B cell (primary cell): ENCODE measurements at regions of chr9 and their contacts with region 1.

Region 1: DNA sequence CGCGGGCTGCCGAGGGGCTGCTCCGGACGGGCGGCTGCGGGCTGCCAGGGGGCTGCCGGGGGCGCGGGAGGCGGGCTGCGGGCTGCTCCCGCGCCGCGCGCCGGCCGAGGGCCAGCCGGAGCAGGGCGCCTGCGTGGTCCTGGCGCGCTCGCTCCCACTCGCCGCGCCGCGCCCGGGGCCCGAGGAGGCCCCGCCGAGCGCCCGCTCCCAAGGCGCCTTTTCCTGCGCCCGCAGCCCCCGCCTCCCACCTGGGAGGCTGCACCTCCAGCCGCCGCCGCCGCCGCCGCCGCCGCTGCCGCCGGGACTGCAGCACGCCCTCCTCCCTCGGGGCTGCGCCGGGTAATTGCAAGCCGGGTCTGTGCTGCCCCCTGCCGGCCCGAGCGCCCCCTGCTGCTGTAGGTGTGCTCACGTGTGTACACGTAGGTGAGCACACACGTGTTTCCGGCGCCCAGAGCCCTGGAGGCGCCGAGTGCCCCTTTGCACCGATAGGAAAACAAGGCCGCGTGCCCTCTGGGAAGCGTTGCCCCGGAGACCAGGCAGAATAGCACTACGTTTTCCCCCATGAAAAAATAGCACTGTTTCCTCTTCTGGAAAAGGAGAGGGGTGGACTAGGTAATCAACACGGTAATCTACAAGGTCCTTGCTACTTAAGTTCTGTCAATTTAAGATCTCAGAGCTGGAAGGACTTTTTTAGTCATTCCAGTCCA is at the start of gene EPB41L4B:
- DNase-seq: peak; percentile 85
- ATAC-seq: peak; percentile 94
- H3K4me3 ChIP-seq: no peak within 1 kb of the TSS
- H3K4me3 Mint-ChIP-seq: peak within 1 kb of the TSS; percentile 89
- H3K27ac ChIP-seq: no peak within 1 kb of the TSS
- H3K27ac Mint-ChIP-seq: no peak within 1 kb of the TSS
- H3K4me1 ChIP-seq: peaks cover 12 to 13% of the 10 kb centered on the region in 2 donors
- H3K4me1 Mint-ChIP-seq: peaks cover 13% of the 10 kb centered on the region
- H3K27me3 ChIP-seq: peaks cover 0 to 53% (median 27%) of the 10 kb centered on the region in 4 experiments
- H3K27me3 Mint-ChIP-seq: peaks cover 68% of the 10 kb centered on the region
- CTCF ChIP-seq: peak; percentile 72
- total RNA-seq, gene EPB41L4B: 2.5 and 2.9 TPM in 2 replicates

Region 2: GRCh38 chr9:108980893-108981292 is 340.0 kb before region 1 on chr9:
- CTCF ChIA-PET with region 1: no interaction called
- POLR2A ChIA-PET with region 1: no interaction called
- intact Hi-C with region 1: no loop called
- DNase-seq: no peak
- ATAC-seq: no peak
- H3K4me3 ChIP-seq: no peak overlapping the region
- H3K4me3 Mint-ChIP-seq: no peak overlapping the region
- H3K27ac ChIP-seq: no peak overlapping the region
- H3K27ac Mint-ChIP-seq: no peak overlapping the region
- H3K4me1 ChIP-seq: no peaks in the 10 kb centered on the region
- H3K4me1 Mint-ChIP-seq: no peaks in the 10 kb centered on the region
- H3K27me3 ChIP-seq: no peaks in the 10 kb centered on the region
- H3K27me3 Mint-ChIP-seq: no peaks in the 10 kb centered on the region
- CTCF ChIP-seq: no peak

Region 3: DNA sequence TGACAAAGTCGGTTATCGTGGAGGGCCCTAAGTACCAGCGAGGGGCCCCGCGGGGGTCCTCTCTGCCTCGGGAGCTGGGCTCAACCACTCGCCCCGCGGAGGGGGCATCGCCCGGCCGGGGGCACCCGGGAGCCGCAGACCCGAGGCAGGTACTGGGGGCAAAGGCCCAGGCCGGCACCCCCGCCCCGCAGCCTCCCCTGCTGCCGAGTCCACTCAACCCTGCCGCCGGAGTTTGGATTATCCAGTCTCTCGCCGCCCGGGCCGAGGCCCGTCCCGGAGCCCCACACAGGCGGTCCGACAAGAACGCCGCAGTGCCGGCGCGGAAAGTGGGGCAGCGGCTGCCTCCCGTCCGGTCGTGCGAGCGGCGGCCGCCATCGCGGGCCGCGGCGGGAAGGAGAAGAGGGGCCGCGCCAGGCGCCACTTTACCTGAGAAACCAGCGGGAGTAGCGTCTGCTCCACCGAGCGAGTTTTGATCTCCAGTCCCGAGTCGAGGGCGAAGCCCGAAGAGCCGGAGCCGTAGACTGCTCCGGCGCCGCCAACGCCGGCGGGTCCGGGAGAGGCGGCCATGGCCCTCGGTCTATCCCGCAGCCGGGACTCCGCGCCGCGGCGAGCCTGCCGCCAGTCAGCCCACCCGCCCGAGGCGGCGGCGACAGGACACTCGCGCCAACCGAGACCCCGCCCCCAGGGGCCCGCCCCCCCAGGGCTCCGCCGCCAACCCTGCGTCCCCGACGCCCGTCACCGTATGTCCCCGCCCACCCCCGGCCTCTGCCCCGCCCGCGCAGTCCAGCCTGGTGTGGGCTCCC is 307.8 kb before region 1 on chr9 and contains the start of gene CTNNAL1:
- CTCF ChIA-PET with region 1: no interaction called
- POLR2A ChIA-PET with region 1: no interaction called
- intact Hi-C with region 1: loop called (anchors 5 kb)
- DNase-seq: peak; percentile 87
- ATAC-seq: peak; percentile 97
- H3K4me3 ChIP-seq: peak within 1 kb of the TSS; percentile 43 to 80 (median 71)
- H3K4me3 Mint-ChIP-seq: peak within 1 kb of the TSS; percentile 94
- H3K27ac ChIP-seq: peak within 1 kb of the TSS; percentile 9 to 50
- H3K27ac Mint-ChIP-seq: peak within 1 kb of the TSS; percentile 90
- H3K4me1 ChIP-seq: peaks cover 16 to 19% of the 10 kb centered on the region in 2 donors
- H3K4me1 Mint-ChIP-seq: peaks cover 42% of the 10 kb centered on the region
- H3K27me3 ChIP-seq: peaks cover 0 to 16% (median 10%) of the 10 kb centered on the region in 4 experiments
- H3K27me3 Mint-ChIP-seq: peaks cover 6% of the 10 kb centered on the region
- CTCF ChIP-seq: no peak
- total RNA-seq, gene CTNNAL1: 1.5 and 2.3 TPM in 2 replicates

Region 4: DNA sequence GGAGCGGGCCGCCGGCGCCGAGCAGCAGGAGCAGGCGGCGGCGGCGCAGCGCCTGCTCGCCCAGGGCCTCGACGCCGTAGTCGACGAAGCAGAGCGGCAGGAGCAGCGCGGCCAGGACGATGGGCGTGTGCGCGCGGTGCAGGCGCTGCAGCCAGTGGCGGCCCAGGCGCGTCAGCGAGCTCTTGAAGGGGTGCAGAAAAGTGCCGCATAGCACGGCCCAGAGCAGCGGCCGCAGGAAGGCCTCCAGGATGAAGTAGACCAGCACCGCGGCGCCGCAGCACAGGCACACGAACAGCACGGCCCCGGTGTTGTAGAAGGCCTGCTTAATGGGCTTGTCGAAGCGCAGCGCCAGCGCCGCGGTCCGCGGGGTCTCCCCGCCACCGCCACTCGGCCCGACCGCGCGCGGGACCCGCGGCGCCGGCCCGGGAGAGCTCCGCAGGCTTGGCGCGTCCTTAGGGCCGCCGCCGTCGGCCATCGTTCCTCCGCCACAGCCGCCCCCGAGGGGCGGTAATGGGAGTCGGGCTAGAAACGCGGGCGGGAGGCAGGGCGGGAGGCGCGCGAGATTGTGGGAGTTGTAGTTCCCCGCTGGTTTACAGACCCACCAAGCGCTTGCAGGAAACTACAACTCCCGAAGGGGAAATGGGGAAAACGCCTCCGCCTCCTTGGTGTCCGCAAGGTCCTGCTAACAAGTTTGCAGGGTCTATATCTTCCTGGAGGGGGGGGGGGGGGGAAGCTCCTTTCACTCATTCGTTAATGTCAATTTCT is 201.3 kb before region 1 on chr9 and contains the start of gene TMEM245:
- CTCF ChIA-PET with region 1: no interaction called
- POLR2A ChIA-PET with region 1: no interaction called
- intact Hi-C with region 1: loop called (anchors 10 kb)
- DNase-seq: peak; percentile 97
- ATAC-seq: peak; percentile 96
- H3K4me3 ChIP-seq: peak within 1 kb of the TSS; percentile 63 to 89 (median 74)
- H3K4me3 Mint-ChIP-seq: peak within 1 kb of the TSS; percentile 91
- H3K27ac ChIP-seq: peak within 1 kb of the TSS; percentile 24 to 81
- H3K27ac Mint-ChIP-seq: peak within 1 kb of the TSS; percentile 86
- H3K4me1 ChIP-seq: peaks cover 18 to 32% of the 10 kb centered on the region in 2 donors
- H3K4me1 Mint-ChIP-seq: peaks cover 30% of the 10 kb centered on the region
- H3K27me3 ChIP-seq: no peaks in the 10 kb centered on the region
- H3K27me3 Mint-ChIP-seq: no peaks in the 10 kb centered on the region
- CTCF ChIP-seq: no peak
- total RNA-seq, gene TMEM245: 33.4 and 34.3 TPM in 2 replicates

Region 5: DNA sequence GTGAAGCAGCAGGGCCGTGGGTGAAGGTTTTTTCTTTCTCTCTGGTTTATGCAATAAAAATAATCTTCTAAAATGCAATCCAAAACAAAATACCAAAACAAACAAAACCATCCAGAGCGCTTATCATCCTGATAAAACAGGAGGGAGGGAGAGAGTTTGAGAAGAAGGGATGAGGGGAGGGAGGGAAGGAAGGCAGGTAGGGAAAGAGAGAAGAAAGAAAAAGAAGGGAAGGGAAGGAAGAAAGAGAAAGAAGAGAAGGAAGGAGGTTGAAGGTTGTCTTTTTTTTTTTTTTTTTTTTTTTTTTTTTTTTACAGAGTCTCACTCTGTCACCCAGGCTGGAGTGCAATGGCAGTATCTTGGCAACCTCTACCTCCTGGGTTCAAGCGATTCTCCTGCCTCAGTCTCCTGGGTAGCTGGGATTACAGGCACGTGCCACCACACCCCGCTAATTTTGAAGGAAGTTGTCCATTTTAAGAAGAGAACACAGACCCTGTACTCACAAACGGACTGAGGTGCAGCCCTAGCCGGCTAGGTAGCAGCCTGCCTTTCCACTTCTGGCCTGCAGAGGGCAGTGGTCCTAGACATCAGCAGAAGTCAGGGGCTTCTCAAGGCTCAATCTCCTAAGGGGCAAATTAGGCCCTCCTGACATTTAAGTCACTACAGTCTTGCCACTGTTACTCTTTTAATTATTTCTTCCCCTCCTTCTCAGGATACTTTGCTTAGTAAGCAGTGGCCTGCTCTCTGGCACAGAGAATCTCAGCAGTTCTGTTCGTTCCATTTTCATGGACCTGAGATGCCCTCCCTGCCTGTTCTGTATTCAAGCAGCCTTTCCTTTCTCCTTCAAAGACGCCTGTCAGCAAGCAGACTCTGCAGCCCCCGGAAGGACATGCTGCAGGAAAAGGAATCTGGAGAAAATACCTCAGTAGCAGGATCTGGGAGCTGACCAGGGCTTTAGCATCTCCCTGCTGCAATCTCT is 76.5 kb before region 1 on chr9:
- CTCF ChIA-PET with region 1: interaction called, 3 read pairs
- POLR2A ChIA-PET with region 1: no interaction called
- intact Hi-C with region 1: loop called (anchors 2 kb)
- DNase-seq: peak; percentile 72
- ATAC-seq: peak; percentile 81
- H3K4me3 ChIP-seq: no peak overlapping the region
- H3K4me3 Mint-ChIP-seq: no peak overlapping the region
- H3K27ac ChIP-seq: no peak overlapping the region
- H3K27ac Mint-ChIP-seq: no peak overlapping the region
- H3K4me1 ChIP-seq: no peaks in the 10 kb centered on the region
- H3K4me1 Mint-ChIP-seq: no peaks in the 10 kb centered on the region
- H3K27me3 ChIP-seq: peaks cover 0 to 19% (median 4%) of the 10 kb centered on the region in 4 experiments
- H3K27me3 Mint-ChIP-seq: peaks cover 22% of the 10 kb centered on the region
- CTCF ChIP-seq: peak; percentile 92